Ascending aorta (tissue), 2 donors: ENCODE measurements at regions of chr9 and their contacts with region 1.

Region 1: DNA sequence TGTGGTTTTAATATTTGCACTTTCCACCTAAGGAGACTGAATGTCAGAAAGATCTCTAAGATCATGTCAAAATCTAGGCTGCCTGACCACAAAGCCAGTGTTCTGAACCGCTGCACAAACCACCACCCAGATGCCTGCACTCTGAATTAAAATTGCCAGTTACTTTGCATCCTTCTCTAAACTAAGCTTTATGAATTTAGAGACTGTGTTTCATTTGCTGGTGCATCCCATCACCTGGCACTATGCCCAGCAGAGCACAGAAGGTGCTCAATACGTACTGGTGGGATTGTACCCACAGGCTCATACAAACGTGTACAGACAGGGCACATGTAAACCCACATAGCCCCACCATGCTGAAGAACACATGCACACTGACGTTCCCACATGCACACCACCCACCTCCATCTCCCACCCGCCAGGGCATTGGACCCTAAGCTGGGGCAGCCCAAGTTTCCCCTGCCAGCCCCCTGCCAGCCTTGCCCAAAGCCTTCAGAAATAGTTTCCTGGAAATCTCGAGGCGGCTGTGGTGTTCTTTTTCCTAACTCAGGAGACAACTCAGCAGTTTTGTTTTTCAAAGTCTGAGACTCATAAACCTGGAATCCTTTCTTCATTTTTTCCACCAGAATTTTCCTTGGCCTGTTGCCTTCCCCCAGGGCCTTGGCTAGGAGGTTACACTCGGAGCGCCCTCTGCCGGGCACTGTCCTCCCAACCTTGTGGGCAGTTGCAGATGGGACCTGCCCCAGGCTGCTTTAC is 9.6 kb upstream of the TRAF1 start:
- DNase-seq: peak; percentile 68 to 98
- H3K4me3 ChIP-seq: peak overlapping the region; percentile 13 to 35
- H3K27ac ChIP-seq: peak overlapping the region; percentile 97 to 98
- H3K4me1 ChIP-seq: peaks cover 31 to 77% of the 10 kb centered on the region in 2 donors
- H3K27me3 ChIP-seq: no peaks in the 10 kb centered on the region
- CTCF ChIP-seq: peak; percentile 86 to 92 (median 89)

Region 2: GRCh38 chr9:120579750-120580590 is 356.2 kb before region 1 on chr9 and contains the start of gene CDK5RAP2:
- intact Hi-C with region 1: no loop called
- DNase-seq: peak; percentile 81 to 97
- H3K4me3 ChIP-seq: peak within 1 kb of the TSS; percentile 92 to 95
- H3K27ac ChIP-seq: peak within 1 kb of the TSS; percentile 81
- H3K4me1 ChIP-seq: peaks cover 4 to 15% of the 10 kb centered on the region in 2 donors
- H3K27me3 ChIP-seq: no peaks in the 10 kb centered on the region
- CTCF ChIP-seq: no peak
- total RNA-seq, gene CDK5RAP2: 33.6 TPM

Region 3: DNA sequence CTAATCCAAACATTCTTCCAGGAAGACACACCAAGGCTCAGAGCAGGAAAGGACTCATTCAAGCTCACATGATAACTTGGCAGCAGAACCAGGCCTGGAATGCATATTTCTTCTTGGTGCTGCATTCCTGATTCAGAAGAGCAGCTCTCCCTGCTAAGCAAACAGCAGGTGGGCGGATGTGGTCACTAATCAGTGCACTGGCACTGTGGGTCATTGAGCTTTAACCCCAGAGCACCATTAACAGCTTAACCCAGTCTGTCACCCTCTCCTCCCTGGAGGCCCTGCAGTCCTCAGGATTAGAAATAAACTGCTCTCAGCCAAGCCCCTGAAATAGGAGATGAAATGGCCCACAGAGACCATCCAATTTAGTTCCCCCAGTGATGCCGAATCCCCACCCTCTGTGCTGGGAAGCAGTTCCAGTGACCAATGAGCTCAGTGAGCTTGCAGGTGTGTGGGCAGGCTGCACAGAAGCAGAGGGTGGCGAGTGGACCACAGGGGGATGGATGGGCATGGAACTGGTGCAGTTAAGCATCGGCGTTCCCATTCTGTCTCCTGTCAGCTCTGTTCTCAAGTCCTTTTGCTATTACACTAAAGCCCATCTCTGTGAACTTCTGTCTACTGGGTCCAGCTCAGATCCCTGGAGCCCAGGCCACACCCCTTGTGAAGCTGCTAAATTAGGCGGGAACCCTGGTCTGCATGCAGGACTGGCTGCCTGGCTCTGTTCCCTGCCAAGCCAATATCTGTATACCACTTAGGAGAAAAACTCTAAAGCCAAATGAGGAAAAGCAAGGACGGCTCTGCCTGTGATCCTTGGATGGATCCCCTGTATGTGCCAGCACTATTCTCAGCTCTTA is 205.3 kb before region 1 on chr9:
- intact Hi-C with region 1: loop called (anchors 10 kb)
- DNase-seq: peak in 1 of 2 donors; percentile 82
- H3K4me3 ChIP-seq: no peak overlapping the region
- H3K27ac ChIP-seq: peak overlapping the region; percentile 68 to 85
- H3K4me1 ChIP-seq: peaks cover 7 to 24% of the 10 kb centered on the region in 2 donors
- H3K27me3 ChIP-seq: no peaks in the 10 kb centered on the region
- CTCF ChIP-seq: no peak

Region 4: GRCh38 chr9:120868676-120869359 is 67.4 kb before region 1 on chr9:
- intact Hi-C with region 1: loop called (anchors 1 kb)
- DNase-seq: peak; percentile 88 to 98
- H3K4me3 ChIP-seq: peak overlapping the region; percentile 54 to 62
- H3K27ac ChIP-seq: peak overlapping the region; percentile 83 to 85
- H3K4me1 ChIP-seq: peaks cover 5 to 16% of the 10 kb centered on the region in 2 donors
- H3K27me3 ChIP-seq: no peaks in the 10 kb centered on the region
- CTCF ChIP-seq: peak; percentile 49 to 71 (median 61)

Region 5: DNA sequence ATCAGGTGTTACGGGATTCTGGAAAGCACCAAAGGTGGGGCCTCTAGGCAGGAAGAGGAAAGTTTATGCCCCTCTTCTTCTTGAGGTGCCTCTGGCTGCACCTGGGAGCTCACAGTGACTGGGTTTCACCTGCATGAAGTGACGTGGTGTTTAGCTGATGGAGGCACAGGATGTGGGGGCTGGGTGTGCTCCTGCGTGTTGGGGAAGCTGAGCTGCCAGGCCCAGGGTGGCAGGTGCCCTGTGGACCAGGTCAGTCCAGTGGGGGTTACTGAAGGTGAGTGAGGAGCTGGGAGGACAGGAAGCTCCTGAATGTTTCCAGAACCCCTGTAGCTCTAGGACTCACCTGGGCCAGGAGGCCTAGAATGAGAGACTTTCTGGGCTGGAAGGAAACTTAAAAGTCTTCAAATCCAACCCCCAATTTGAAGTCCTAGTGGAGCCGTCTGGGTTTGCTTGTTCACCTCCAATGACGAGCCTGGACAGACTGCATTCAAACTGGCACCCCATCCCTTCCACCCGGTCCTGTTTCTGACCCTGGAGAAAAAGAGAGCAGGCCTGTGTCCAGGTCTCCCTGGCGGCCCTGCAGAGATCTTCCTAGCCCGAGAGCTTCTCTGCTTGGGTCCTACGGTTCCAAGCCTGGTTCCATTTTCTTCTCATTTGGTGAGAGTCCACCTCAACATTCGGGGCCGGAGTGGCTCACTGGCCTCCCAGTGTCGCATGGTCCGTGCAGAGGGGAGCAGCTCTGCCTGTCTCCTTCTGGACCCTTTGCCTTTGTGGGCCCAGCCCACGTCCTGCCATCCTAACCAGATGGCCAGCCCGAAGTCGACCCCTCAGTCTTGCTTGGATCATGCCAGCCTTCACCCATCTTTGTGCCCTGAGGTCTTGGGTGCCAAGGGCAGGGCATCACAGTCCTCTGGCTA is 31.9 kb before region 1 on chr9:
- intact Hi-C with region 1: no loop called
- DNase-seq: no peak
- H3K4me3 ChIP-seq: no peak overlapping the region
- H3K27ac ChIP-seq: peak overlapping the region in 1 of 2 donors; percentile 5
- H3K4me1 ChIP-seq: no peaks in the 10 kb centered on the region
- H3K27me3 ChIP-seq: no peaks in the 10 kb centered on the region
- CTCF ChIP-seq: no peak

Region 6: DNA sequence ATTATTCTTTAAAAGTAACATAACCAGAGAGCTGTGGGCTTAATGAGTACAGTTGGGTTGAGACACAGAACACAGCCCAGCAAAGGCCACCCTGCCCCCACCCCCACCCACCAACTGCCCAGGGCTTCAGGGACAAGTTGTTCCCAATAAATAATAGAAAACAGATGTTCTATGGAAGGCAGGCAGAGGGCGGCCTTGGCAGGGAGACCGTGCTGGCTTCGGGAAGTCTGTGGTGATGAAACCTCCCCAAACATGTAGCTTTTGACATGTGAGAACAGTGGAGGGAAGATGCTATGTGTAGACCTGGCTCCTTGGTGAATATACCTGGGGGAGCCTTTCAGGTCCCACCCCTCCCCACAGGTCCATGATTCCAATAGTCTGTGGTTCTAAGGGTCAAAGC is 19.6 kb before region 1 on chr9:
- intact Hi-C with region 1: loop called (anchors 1 kb)
- DNase-seq: peak; percentile 61 to 92
- H3K4me3 ChIP-seq: no peak overlapping the region
- H3K27ac ChIP-seq: peak overlapping the region; percentile 97 to 98
- H3K4me1 ChIP-seq: peaks cover 31 to 56% of the 10 kb centered on the region in 2 donors
- H3K27me3 ChIP-seq: no peaks in the 10 kb centered on the region
- CTCF ChIP-seq: peak; percentile 20 to 39 (median 27)

Region 7: DNA sequence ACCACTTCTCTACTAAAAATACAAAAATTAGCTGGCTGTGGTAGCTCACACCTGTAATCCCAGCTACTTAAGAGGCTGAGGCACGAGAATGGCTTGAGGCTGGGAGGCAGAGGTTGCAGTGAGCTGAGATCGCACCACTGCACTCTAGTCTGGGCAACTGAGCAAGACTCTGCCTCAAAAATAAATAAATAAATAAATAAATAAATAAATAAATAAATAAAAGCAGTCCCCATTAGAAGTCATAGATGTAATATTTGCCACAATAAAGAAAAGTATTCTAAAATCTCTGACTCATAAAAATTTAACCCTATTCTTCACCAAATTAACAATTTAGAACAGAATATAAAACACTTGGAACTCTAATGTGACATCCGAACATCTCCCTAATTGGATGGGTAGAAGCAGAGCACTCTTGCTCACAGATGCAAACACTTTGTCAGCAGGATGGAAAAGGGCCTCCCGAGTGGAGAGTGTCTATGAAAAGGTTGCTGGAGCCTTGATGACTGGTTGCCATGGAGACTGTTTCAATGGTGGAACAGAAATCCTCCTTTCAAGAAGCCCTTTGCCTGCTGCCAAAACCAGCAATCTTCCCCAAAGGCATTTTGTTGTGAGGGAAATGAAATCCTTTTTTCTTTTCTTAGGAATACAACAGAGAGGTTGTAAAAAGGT is 29.3 kb after region 1 on chr9:
- intact Hi-C with region 1: loop called (anchors 1 kb)
- DNase-seq: peak in 1 of 2 donors; percentile 75
- H3K4me3 ChIP-seq: peak overlapping the region in 1 of 2 donors; percentile 9
- H3K27ac ChIP-seq: peak overlapping the region; percentile 72 to 88
- H3K4me1 ChIP-seq: peaks cover 4 to 11% of the 10 kb centered on the region in 2 donors
- H3K27me3 ChIP-seq: no peaks in the 10 kb centered on the region
- CTCF ChIP-seq: no peak